GM13976 (cell line): ENCODE measurements at regions of chr6 and their contacts with region 1.

Region 1: DNA sequence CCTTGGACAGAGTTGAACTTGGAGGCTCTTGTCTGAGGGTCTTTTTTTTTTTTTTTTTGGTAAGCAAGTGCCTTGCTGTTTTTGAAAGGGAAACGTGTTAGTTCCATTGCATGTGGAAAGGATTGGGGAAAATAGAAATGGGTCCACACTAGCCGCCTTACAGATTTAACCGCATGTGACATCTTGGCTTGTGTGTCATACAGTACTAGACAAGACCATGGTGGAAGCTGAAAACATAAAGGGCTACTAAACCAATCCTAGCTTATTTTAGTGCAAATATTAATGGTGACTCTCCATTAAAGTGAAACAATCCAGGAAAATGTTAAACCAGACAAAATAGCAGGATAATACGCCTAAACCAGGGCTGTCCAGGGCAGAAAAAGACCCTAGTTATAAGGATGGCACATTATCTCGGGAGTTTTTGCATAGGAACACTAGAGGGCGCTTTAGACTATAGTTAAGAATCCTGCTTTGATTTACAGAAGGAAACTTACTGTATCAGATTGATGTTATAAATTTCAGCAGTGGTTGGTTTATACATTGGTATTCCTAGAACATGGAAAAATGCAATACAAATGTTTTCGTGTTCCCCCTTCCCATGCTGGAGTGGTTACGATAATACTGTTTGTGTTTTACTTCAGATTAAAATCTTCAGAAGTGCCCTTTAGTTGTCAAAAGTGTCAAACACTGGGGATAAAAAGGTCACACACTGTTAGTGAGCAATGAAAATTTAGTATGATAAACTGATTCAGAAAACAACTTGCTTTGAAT is 59.8 kb upstream of the DEK start:
- DNase-seq: peak; percentile 68
- CTCF ChIP-seq: peak; percentile 25

Region 2: GRCh38 chr6:18503593-18504231 is 179.6 kb after region 1 on chr6:
- in situ Hi-C with region 1: loop called (anchors 10 kb)
- DNase-seq: peak; percentile 53
- CTCF ChIP-seq: peak; percentile 80